Ascending aorta (tissue), 2 donors: ENCODE measurements at regions of chr15 and their contacts with region 1.

Region 1: DNA sequence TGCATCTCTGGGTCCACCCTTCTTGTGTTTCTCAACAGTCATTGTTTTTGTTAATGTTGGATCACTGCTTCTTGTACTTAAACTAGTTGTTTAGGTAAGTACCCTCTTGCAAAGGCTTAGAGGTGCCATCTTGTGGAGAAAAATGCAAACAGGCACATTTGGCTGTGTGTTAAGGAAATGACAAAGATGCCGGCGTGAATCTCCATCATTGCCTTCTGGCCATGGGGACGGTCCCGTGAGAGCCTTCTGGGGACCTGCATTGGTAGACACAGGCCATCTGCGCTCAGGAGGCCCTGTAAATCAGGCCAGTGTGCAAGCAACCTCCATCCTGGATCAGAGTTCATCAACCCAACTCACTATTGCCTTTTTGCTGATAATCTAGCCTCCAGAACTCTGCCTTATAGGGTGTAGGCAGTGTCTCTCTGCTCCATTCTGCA is 158.6 kb upstream of the NR2E3 start:
- DNase-seq: peak in 1 of 2 donors; percentile 71
- H3K4me3 ChIP-seq: no peak overlapping the region
- H3K27ac ChIP-seq: no peak overlapping the region
- H3K4me1 ChIP-seq: peaks cover 3 to 30% of the 10 kb centered on the region in 2 donors
- H3K27me3 ChIP-seq: no peaks in the 10 kb centered on the region
- CTCF ChIP-seq: peak in 2 of 3 experiments; percentile 40 to 49

Region 2: DNA sequence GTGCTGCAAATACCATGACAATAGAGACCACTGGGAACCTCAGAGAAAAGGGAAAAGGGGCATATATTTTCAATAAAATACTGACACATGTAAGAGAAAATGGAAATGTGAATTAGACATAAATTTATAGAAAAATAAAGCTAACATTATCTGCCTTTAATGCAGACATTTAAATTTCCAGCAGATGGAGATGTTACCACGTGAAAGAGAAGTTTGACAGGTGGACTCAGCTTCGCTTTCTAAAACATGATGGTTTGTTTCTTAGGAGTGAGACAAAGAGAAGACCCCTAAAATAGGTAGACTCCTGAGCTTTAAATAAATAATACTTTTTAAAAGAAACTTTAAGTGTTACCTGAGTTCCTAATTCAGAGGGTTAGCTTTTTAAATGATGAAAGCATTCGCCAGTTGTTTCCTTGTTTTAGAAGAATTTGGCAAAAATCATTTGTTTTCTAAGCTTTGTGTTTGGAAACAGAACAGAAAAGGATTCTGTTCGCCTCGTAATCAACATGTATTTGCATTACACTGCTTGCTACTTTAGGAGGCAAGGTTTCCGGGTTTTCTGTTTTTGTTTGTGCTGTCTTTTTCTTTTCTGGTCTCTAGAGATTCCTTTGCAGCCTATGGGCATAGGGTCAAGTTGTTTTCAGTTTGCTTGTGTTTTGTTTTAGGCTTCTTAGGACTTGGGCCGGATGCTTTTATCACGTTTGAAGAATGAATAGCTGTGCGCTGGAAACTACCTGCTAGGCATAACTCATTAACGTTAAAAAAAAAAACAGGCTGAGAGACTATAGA is 265.1 kb before region 1 on chr15:
- intact Hi-C with region 1: loop called (anchors 10 kb)
- DNase-seq: no peak
- H3K4me3 ChIP-seq: no peak overlapping the region
- H3K27ac ChIP-seq: peak overlapping the region in 1 of 2 donors; percentile 13
- H3K4me1 ChIP-seq: peaks cover 6 to 28% of the 10 kb centered on the region in 2 donors
- H3K27me3 ChIP-seq: no peaks in the 10 kb centered on the region
- CTCF ChIP-seq: peak; percentile 50 to 65 (median 52)

Region 3: DNA sequence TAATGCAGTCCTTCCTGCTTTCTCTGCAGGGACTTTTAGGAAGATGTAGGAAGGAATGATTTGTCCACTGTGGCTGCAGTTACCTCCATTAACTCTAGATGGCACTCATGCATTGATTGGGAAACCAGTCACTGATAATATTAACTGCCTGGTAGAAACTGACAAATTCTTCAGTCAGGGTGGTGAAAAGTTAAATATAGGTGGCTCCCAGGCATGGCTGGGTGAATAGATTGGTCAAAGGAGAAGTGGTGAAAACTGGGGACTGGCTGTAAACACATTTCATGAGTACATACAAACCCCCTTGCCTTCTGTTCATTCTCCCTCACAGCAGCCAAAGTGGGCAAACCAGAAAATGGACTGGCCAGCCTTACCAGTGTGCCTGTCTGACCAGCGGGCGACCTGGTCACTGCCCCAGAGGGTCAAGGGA is 203.1 kb before region 1 on chr15:
- intact Hi-C with region 1: loop called (anchors 1 kb)
- DNase-seq: peak in 1 of 2 donors; percentile 70
- H3K4me3 ChIP-seq: no peak overlapping the region
- H3K27ac ChIP-seq: no peak overlapping the region
- H3K4me1 ChIP-seq: peaks cover 0 to 5% of the 10 kb centered on the region in 2 donors
- H3K27me3 ChIP-seq: no peaks in the 10 kb centered on the region
- CTCF ChIP-seq: peak; percentile 87 to 91 (median 88)

Region 4: DNA sequence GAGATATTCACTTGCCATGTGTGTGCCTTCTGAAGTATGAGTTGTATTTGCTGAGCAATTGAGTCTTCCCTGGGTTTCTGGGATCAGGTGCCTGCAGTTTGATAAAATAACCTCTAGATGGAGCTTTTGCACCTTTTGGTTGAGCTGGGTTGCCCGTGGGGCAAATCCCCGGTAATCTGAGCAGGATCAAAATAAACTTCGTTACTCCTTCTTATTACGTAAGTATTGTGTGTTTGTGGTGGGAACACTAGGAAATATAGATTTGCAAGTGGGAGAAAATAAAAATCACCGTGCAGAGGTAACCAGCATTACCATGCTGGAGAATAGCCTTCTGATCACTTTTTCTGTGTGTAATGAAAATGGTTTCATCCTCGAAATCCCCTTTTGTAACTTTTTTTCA is 118.8 kb before region 1 on chr15:
- intact Hi-C with region 1: loop called (anchors 5 kb)
- DNase-seq: no peak
- H3K4me3 ChIP-seq: no peak overlapping the region
- H3K27ac ChIP-seq: no peak overlapping the region
- H3K4me1 ChIP-seq: no peaks in the 10 kb centered on the region
- H3K27me3 ChIP-seq: no peaks in the 10 kb centered on the region
- CTCF ChIP-seq: peak in 2 of 3 experiments; percentile 35 to 54

Region 5: DNA sequence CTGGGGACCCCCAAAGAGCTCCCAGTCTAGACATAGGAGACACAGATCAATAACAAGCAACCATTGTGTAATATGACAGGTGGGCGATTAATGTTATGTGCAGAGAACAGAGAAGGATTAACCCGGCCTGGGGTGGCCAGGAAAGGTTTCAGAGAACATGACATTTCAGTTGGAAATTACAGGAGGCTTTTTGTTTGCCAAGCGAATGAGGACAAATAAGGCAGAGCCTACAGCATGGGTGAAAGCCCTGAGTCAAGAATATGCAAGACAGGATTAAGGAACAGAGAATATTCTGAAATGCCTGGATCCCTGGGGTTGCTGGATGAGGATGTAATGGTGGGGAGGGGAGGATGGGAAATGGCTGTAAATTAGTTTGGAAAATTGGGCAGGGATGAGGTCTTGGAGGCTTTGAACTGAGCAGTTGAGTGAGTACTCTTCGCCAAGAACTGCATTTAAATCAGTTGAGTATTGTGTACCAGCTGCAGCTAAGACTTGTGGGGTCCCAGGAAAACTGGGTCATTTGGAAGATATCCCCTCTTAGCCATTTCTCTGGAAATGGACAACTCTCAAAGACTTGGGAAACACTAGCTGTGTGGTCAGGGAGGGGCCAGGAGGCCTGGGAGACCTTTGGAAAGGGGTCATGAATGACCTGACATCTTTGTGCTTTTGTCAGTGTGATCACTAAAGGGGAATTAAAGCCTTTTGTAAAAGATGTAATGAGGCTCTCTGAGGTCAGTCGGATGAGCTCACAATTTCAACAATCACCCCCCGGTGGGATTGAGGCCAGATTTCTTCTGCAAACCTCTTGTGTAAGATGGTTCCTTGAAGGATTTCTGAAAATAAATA is 40.0 kb before region 1 on chr15:
- intact Hi-C with region 1: loop called (anchors 1 kb)
- DNase-seq: no peak
- H3K4me3 ChIP-seq: no peak overlapping the region
- H3K27ac ChIP-seq: no peak overlapping the region
- H3K4me1 ChIP-seq: peaks cover 3 to 19% of the 10 kb centered on the region in 2 donors
- H3K27me3 ChIP-seq: no peaks in the 10 kb centered on the region
- CTCF ChIP-seq: no peak

Region 6: GRCh38 chr15:71730277-71731144 is 78.7 kb after region 1 on chr15:
- intact Hi-C with region 1: loop called (anchors 5 kb)
- DNase-seq: peak in 1 of 2 donors; percentile 69
- H3K4me3 ChIP-seq: no peak overlapping the region
- H3K27ac ChIP-seq: peak overlapping the region; percentile 31 to 46
- H3K4me1 ChIP-seq: peaks cover 0 to 16% of the 10 kb centered on the region in 2 donors
- H3K27me3 ChIP-seq: no peaks in the 10 kb centered on the region
- CTCF ChIP-seq: peak; percentile 74 to 82 (median 80)